ENCODE measurements at regions of chr10 and their contacts with region 1.

Region 1: DNA sequence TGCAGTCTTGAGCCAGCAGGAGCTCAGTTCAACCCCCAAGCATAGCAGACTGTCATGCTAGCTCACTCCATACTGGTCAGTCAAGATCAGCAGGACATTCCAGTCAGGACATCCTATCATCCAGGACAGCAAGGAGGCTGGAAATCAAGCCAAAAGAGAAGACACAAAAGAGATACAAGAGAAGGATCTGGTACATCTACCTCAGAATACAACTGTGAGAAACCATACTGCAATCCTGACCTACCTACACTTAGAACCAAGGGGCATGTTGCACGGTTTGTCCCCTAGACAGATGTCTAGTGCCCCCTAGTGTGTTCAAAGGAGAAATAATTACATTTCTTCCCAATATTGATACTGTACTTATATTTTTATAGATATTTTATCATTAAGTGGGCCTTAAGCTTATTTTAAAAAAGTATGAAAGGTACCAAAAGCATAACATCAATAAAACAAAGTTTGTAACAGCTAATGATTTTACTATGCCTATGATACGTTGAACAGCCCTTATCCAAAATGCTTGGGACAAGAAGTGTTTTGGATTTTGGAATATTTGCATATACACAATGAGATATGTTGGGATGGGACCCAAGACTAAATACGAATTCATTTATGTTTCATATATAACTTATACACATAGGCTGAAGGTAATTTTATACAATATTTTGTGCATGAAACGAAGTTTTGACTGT is 26.7 kb downstream of the ERCC6 start:
- DNase-seq: no peak
- H3K4me3 ChIP-seq: no peak overlapping the region
- H3K27ac ChIP-seq: no peak overlapping the region
- H3K4me1 ChIP-seq: no peaks in the 10 kb centered on the region
- H3K27me3 ChIP-seq: no peaks in the 10 kb centered on the region
- CTCF ChIP-seq: peak in 2 of 3 experiments; percentile 50 to 52; a peak in 3 of 4 replicates
- EP300 ChIP-seq: no peak
- POLR2A ChIP-seq: no peak
- RAD21 ChIP-seq: peak; percentile 78 to 81

Region 2: DNA sequence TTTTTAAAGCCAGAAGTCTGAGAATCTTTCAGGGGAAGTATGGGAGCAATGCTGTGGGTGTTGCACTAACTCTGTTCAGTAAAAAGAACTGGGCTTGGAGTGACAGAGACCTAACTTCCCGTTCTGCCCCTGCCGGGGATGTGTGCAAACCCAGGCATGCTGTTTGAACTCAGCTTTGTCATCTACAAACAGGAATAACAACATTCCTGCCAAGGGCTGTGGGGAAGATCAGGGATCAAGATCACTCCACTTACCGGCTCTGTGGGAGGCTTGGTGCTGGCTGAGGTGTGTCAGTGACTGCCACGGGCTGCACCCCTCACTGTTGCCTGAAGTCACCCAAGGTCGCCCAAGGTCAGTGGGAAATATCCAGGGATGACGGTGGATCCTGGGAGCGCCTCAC is 93.3 kb before region 1 on chr10:
- CTCF ChIA-PET with region 1: interaction called, 38 read pairs
- POLR2A ChIA-PET with region 1: interaction called, 3 read pairs
- DNase-seq: no peak
- H3K4me3 ChIP-seq: no peak overlapping the region
- H3K27ac ChIP-seq: no peak overlapping the region
- H3K4me1 ChIP-seq: peaks cover 0 to 6% (median 3%) of the 10 kb centered on the region in 4 experiments; a peak in 4 of 7 replicates
- H3K27me3 ChIP-seq: no peaks in the 10 kb centered on the region
- CTCF ChIP-seq: no peak
- EP300 ChIP-seq: peak in 1 of 2 experiments; percentile 40; a peak in 1 of 3 replicates
- POLR2A ChIP-seq: no peak
- RAD21 ChIP-seq: no peak

Region 3: DNA sequence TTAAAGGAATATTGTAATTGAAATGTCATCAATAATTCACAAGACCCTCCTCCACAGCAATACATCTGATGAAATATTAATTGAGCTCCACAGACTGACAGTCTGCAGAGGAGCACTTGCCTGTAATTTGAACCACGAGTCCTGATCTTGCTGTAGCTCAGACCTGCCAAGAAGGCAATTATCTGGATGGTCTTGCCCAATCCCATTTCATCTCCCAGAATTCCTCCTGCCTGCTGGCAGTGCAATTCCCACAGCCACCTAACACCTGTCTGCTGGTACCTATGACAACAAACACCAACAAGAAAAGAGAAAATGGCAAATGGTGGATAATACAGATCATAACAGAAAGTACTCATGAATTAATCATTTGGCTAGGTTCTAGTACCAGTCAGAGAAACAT is 11.8 kb before region 1 on chr10:
- CTCF ChIA-PET with region 1: interaction called, 33 read pairs
- POLR2A ChIA-PET with region 1: no interaction called
- DNase-seq: no peak
- H3K4me3 ChIP-seq: no peak overlapping the region
- H3K27ac ChIP-seq: no peak overlapping the region
- H3K4me1 ChIP-seq: no peaks in the 10 kb centered on the region
- H3K27me3 ChIP-seq: no peaks in the 10 kb centered on the region
- CTCF ChIP-seq: no peak
- EP300 ChIP-seq: no peak
- POLR2A ChIP-seq: no peak
- RAD21 ChIP-seq: no peak

Region 4: DNA sequence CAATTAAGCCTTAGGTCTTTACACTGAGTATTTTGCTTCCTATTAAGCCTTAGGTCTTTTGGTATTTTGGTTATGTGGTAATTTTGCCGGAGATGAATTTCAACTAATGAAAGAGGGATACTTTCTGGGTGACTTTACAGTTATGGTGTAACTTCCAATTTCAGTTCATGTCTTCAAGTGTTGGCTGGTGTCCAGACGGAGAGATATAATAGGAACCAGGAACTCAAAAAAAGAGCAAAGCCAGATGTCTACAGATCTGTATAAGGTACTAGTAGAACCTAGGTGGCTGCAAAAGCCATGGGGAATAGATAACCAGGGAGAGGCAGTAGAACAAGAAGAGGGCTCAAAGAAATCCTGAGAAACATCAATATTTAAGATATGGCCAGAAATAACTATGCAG is 14.4 kb after region 1 on chr10:
- CTCF ChIA-PET with region 1: interaction called, 45 read pairs
- POLR2A ChIA-PET with region 1: no interaction called
- DNase-seq: no peak
- H3K4me3 ChIP-seq: no peak overlapping the region
- H3K27ac ChIP-seq: no peak overlapping the region
- H3K4me1 ChIP-seq: no peaks in the 10 kb centered on the region; a peak in 1 of 7 replicates
- H3K27me3 ChIP-seq: no peaks in the 10 kb centered on the region
- CTCF ChIP-seq: no peak
- EP300 ChIP-seq: no peak
- POLR2A ChIP-seq: no peak
- RAD21 ChIP-seq: no peak